ENCODE measurements at regions of chr5 and their contacts with region 1.

Region 1: GRCh38 chr5:139341650-139342422 is at the start of gene PAIP2:
- DNase-seq: peak; percentile 98 to 99
- ATAC-seq: peak; percentile 96 to 97 (median 96)
- H3K4me3 ChIP-seq: peak within 1 kb of the TSS; percentile 98
- H3K27ac ChIP-seq: peak within 1 kb of the TSS; percentile 100
- H3K4me1 ChIP-seq: peaks cover 25% of the 10 kb centered on the region
- H3K27me3 ChIP-seq: no peaks in the 10 kb centered on the region
- CTCF ChIP-seq: peak; percentile 72
- total RNA-seq, gene PAIP2: 111 to 144 (median 116) TPM

Region 2: DNA sequence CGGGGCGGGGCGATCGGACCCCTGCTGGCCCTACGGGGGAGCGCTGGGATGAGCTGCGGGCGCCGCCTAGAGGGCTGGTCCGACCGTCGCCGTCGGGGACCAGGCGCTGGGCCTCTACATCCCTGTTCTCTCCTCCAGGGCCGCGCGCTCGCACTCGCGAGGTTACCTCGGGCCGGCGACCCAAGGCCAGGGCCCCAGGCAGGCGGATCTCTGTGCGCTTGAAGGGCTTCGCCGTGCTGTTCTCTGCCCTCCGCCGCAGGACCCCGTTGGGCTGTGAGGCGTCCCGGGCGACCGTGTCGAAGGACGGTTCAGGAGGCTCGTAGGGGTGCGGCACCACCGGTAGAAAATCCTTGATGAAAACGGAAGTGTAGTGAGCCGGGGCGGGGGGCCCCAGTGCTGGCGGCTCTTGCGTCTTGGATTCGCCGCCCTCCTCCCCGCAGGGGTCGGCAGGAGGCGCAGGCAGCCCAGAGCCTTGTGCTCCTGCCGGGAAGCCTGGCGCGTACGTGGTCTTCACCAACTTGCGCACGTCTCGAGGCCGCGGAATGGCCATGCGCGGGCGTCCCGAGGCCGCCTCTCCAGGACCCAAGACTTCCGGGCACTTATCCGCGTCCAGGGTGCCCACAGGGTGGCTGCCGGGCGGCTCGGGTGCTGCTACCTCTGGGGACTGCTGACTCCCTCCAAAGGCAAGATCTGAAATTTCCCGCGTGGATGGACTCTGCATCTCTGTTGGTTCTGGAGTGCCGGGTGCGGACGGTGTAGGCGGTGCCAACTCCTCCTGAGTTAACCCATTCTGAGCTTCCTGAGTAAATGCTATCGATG is 51.1 kb after region 1 on chr5:
- intact Hi-C with region 1: loop called (anchors 5 kb)
- DNase-seq: peak; percentile 57 to 82
- ATAC-seq: peak in 1 of 4 donors; percentile 7
- H3K4me3 ChIP-seq: peak overlapping the region; percentile 93
- H3K27ac ChIP-seq: peak overlapping the region; percentile 100
- H3K4me1 ChIP-seq: peaks cover 59% of the 10 kb centered on the region
- H3K27me3 ChIP-seq: no peaks in the 10 kb centered on the region
- CTCF ChIP-seq: peak; percentile 23

Region 3: GRCh38 chr5:139446956-139447779 is 105.3 kb after region 1 on chr5:
- intact Hi-C with region 1: no loop called
- DNase-seq: no peak
- ATAC-seq: no peak
- H3K4me3 ChIP-seq: no peak overlapping the region
- H3K27ac ChIP-seq: no peak overlapping the region
- H3K4me1 ChIP-seq: no peaks in the 10 kb centered on the region
- H3K27me3 ChIP-seq: no peaks in the 10 kb centered on the region
- CTCF ChIP-seq: no peak

Region 4: GRCh38 chr5:139560752-139561654 is 219.2 kb after region 1 on chr5 and contains the start of gene UBE2D2:
- intact Hi-C with region 1: no loop called
- DNase-seq: peak; percentile 98 to 99
- ATAC-seq: peak; percentile 95 to 98 (median 97)
- H3K4me3 ChIP-seq: peak within 1 kb of the TSS; percentile 98
- H3K27ac ChIP-seq: peak within 1 kb of the TSS; percentile 98
- H3K4me1 ChIP-seq: peaks cover 37% of the 10 kb centered on the region
- H3K27me3 ChIP-seq: no peaks in the 10 kb centered on the region
- CTCF ChIP-seq: no peak
- total RNA-seq, gene UBE2D2: 156 to 175 (median 164) TPM

Measured in psoas muscle (tissue), 8 donors.